Activated CD4-positive, alpha-beta T cell treated with anti-CD3 and anti-CD28 coated beads for 36 hours (primary cell): ENCODE measurements at regions of chr15 and their contacts with region 1.

Region 1: GRCh38 chr15:101008158-101009139 is 89.3 kb downstream of the LRRK1 start:
- DNase-seq: peak; percentile 92
- ATAC-seq: peak; percentile 92
- H3K4me3 Mint-ChIP-seq: peak overlapping the region; percentile 82
- H3K27ac Mint-ChIP-seq: peak overlapping the region; percentile 75
- H3K4me1 Mint-ChIP-seq: peaks cover 19% of the 10 kb centered on the region
- H3K27me3 Mint-ChIP-seq: peaks cover 3% of the 10 kb centered on the region

Region 2: DNA sequence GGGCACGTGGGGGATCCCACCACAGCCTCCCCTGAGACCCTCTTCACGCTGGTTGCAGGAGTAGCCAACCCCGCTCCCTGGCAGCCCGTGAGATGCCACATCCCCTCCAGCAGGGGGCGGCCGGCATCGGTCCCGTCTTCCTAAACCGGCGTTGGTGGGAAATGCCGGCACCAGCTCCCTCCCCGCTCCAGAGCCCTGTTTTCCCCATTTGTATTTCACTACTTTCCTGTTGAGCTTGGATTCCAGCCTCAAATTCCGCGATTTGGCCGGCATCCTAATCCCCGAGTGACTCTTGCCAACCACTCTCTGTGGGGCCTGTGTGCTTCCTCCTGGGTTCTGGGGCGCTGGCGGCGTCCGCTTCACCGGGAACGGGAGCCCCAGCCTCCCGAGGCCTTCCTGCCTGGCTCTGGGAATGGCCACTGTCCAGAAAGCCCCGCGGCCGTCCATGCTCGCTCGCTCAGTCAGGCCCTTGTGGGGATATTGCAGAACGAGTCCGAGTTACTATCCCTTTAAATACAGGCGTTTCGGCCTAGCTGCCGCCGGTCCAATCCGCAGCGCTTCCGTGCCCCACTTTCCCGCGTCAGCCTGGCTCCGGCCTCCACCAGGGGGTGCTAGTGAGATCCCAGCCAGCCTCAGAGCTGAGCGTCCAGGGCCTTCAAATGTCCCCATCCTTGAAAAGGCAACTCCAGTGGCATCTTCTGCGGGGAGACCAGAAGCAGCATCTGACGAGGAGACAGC is 658.6 kb before region 1 on chr15:
- CTCF ChIA-PET with region 1: interaction called, 22 read pairs
- POLR2A ChIA-PET with region 1: no interaction called
- intact Hi-C with region 1: loop called in 1 of 2 experiments (anchors 1 kb)
- DNase-seq: peak; percentile 93
- ATAC-seq: peak; percentile 95
- H3K4me3 Mint-ChIP-seq: peak overlapping the region; percentile 78
- H3K27ac Mint-ChIP-seq: peak overlapping the region; percentile 77
- H3K4me1 Mint-ChIP-seq: peaks cover 7% of the 10 kb centered on the region
- H3K27me3 Mint-ChIP-seq: peaks cover 7% of the 10 kb centered on the region

Region 3: DNA sequence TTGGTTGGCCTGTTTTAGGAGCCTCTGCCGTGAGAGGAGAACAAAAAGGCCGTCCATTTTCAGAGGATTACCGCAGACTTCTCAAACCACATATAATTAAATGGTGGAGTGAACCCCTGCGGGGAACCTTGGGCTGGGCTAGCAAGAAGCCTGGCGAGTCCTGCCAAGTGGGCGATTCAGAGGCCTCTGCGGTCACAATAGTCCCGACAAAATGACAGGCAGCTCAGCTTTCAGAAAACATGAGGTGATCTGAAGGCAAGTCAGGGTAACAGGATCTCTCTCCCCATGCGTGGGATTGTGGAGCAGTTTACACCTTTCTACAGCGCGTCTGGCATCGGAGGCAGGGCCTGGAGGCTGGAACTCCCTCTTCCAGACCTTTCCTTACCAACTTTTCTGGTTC is 271.2 kb before region 1 on chr15:
- CTCF ChIA-PET with region 1: no interaction called
- POLR2A ChIA-PET with region 1: no interaction called
- intact Hi-C with region 1: no loop called
- DNase-seq: no peak
- ATAC-seq: no peak
- H3K4me3 Mint-ChIP-seq: no peak overlapping the region
- H3K27ac Mint-ChIP-seq: no peak overlapping the region
- H3K4me1 Mint-ChIP-seq: no peaks in the 10 kb centered on the region
- H3K27me3 Mint-ChIP-seq: peaks cover 2% of the 10 kb centered on the region

Region 4: GRCh38 chr15:100918034-100918689 is 90.3 kb before region 1 on chr15:
- CTCF ChIA-PET with region 1: interaction called, 181 read pairs
- POLR2A ChIA-PET with region 1: no interaction called
- intact Hi-C with region 1: loop called (anchors 1 kb)
- DNase-seq: peak; percentile 84
- ATAC-seq: peak; percentile 94
- H3K4me3 Mint-ChIP-seq: peak overlapping the region; percentile 66
- H3K27ac Mint-ChIP-seq: peak overlapping the region; percentile 0
- H3K4me1 Mint-ChIP-seq: peaks cover 15% of the 10 kb centered on the region
- H3K27me3 Mint-ChIP-seq: peaks cover 55% of the 10 kb centered on the region

Region 5: GRCh38 chr15:101024073-101024695 is 15.7 kb after region 1 on chr15:
- CTCF ChIA-PET with region 1: interaction called, 64 read pairs
- POLR2A ChIA-PET with region 1: no interaction called
- intact Hi-C with region 1: no loop called
- DNase-seq: no peak
- ATAC-seq: no peak
- H3K4me3 Mint-ChIP-seq: no peak overlapping the region
- H3K27ac Mint-ChIP-seq: no peak overlapping the region
- H3K4me1 Mint-ChIP-seq: no peaks in the 10 kb centered on the region
- H3K27me3 Mint-ChIP-seq: peaks cover 3% of the 10 kb centered on the region

Region 6: DNA sequence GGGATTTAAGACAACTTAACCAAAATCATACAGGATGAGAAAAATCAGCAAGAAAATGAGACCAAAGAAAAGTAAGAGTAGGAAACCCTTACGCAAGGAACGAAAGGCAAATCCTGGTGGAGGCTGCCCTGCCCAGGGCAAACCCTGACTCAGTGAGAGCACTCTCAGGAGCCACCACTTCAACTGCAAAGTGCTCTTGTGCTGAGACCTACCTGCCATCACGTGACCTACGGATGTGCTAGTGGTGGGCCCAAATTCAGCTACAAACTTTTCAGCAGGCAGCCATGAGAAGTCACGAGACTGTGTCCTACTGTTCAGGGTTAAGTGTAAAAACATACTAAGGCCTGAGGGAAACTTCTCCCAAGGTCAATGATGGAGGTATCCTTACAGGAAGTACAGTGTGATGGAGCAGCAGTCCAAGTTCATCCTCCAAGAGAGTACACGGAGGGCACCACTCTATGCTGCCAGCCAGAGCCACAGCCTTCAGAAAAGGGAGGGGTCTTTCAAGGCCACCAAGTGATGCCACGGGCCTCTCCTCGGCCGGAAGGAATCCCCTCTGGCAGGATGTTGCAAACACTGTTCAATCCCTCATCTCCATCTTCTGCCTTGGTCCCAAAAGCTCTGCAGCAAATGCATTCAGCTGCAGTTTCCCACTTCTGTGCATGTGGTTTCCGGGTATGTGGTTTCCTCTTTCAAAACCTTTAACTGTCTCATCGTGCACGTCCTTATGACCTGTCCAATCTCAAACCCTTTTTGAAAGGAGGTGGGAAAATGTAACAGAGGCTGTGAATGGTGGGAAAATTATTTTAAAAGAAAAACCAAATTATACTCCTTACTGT is 233.9 kb after region 1 on chr15:
- CTCF ChIA-PET with region 1: interaction called, 10 read pairs
- POLR2A ChIA-PET with region 1: no interaction called
- intact Hi-C with region 1: no loop called
- DNase-seq: peak; percentile 73
- ATAC-seq: peak; percentile 75
- H3K4me3 Mint-ChIP-seq: peak overlapping the region; percentile 40
- H3K27ac Mint-ChIP-seq: peak overlapping the region; percentile 89
- H3K4me1 Mint-ChIP-seq: peaks cover 86% of the 10 kb centered on the region
- H3K27me3 Mint-ChIP-seq: no peaks in the 10 kb centered on the region